Heart right ventricle (tissue), 16 donors: ENCODE measurements at regions of chr1 and their contacts with region 1.

Region 1: DNA sequence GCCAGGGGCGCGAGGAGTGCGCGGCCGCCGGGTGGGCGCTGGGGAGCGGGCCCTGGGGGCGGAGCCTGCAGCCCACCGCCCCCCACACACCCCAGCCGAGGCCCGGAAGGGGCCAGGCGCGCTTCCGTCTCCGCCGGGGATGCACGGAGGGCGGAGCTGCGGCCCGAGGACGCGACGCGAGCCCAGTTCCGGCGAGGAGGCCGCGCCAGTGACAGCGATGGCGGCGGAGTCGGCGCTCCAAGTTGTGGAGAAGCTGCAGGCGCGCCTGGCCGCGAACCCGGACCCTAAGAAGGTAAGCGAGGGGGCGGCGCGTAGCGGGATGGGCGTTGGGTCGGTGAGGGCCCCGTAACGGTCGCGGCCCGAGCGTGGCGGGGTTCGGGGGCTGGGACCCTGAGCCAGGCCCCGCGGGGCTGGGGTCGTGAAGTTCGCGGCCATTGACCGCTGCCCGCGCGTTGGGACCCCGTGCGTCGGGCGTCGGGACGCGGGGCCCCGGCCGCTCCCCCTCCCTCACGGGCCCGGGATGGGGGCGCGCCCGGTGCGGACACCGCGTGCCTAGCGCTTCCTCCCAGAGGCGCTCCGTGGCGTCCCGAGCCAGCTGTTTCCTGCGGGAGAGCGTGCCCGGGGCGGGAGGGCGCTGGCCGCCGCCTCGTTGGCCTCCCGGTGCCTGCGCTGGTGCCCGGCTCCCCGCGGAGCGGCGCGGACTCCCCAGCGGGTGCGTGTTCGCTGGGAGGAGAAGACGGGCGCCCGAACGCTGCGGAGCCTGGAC is at the start of gene ELOA:
- DNase-seq: peak; percentile 64 to 79
- ATAC-seq: peak; percentile 94 to 98 (median 96)
- H3K4me3 ChIP-seq: peak within 1 kb of the TSS; percentile 70 to 100 (median 96)
- H3K27ac ChIP-seq: peak within 1 kb of the TSS; percentile 88 to 98 (median 94)
- H3K4me1 ChIP-seq: peaks cover 8 to 52% (median 43%) of the 10 kb centered on the region in 9 donors
- H3K27me3 ChIP-seq: no peaks in the 10 kb centered on the region
- CTCF ChIP-seq: no peak
- total RNA-seq, gene ELOA: 28.3 to 39.0 (median 34.3) TPM

Region 2: GRCh38 chr1:23559136-23559984 is 184.1 kb before region 1 on chr1 and contains the start of gene ID3:
- intact Hi-C with region 1: loop called in 2 of 10 experiments (anchors 10 kb)
- DNase-seq: peak; percentile 97
- ATAC-seq: peak; percentile 66 to 83 (median 79)
- H3K4me3 ChIP-seq: peak within 1 kb of the TSS; percentile 62 to 97 (median 82)
- H3K27ac ChIP-seq: peak within 1 kb of the TSS; percentile 90 to 99 (median 95)
- H3K4me1 ChIP-seq: peaks cover 6 to 81% (median 61%) of the 10 kb centered on the region in 9 donors
- H3K27me3 ChIP-seq: peaks cover 0 to 23% (median 0%) of the 10 kb centered on the region in 7 donors
- CTCF ChIP-seq: no peak
- total RNA-seq, gene ID3: 44.7 to 148 (median 83.4) TPM

Region 3: DNA sequence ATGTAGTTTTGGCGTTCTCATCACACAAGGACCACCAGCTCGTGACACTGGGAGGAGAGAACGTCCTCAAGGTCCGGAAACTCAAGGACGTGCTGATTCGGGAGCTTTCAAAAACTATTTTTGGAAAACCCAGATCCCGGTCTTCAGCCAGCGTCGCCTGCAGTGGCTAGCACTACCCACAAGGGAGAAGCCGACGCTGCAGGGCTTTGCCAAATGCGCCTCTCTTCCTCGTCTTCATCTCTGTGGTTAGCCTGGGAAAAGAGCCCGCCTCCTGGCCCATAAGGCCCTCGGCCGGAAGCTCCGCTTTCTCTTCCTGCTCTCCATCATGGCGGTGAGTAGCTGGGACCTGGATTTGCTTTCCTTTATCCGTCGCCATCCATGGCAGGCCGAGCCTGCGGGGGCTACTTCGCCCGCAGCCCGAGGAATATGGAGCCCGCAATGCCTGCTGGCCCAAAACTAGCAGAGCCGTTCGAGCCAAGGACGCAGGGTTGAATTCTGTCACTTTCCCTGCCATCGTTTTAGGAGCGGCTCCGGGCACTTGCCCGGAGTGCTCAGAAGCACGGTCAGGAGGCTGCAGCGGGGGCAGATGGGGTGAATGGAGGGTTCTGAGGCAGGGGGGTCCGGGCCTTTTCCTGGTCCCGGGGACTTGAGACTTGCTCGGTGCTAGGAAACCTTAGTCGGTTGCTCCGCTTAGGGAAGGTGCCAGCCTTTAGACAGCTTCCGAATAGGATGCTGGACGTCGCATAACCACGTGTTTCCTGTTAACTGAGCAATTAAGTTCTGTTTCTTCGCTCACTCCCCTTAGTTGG is 51.8 kb before region 1 on chr1 and contains the start of gene RPL11:
- intact Hi-C with region 1: loop called in 6 of 10 experiments (anchors 5 to 10 kb)
- DNase-seq: peak; percentile 90 to 95
- ATAC-seq: peak; percentile 99 to 100 (median 100)
- H3K4me3 ChIP-seq: peak within 1 kb of the TSS; percentile 75 to 99 (median 84)
- H3K27ac ChIP-seq: peak within 1 kb of the TSS; percentile 67 to 95 (median 80)
- H3K4me1 ChIP-seq: peaks cover 5 to 50% (median 45%) of the 10 kb centered on the region in 9 donors
- H3K27me3 ChIP-seq: no peaks in the 10 kb centered on the region
- CTCF ChIP-seq: peak; percentile 68 to 91 (median 80)
- total RNA-seq, gene RPL11: 577 to 756 (median 612) TPM

Region 4: GRCh38 chr1:23699280-23700179 is 43.9 kb before region 1 on chr1:
- intact Hi-C with region 1: loop called in 6 of 10 experiments (anchors 5 to 10 kb)
- DNase-seq: no peak
- ATAC-seq: peak in 1 of 8 donors; percentile 19
- H3K4me3 ChIP-seq: no peak overlapping the region
- H3K27ac ChIP-seq: no peak overlapping the region
- H3K4me1 ChIP-seq: peaks cover 0 to 51% (median 27%) of the 10 kb centered on the region in 9 donors
- H3K27me3 ChIP-seq: no peaks in the 10 kb centered on the region
- CTCF ChIP-seq: no peak

Region 5: DNA sequence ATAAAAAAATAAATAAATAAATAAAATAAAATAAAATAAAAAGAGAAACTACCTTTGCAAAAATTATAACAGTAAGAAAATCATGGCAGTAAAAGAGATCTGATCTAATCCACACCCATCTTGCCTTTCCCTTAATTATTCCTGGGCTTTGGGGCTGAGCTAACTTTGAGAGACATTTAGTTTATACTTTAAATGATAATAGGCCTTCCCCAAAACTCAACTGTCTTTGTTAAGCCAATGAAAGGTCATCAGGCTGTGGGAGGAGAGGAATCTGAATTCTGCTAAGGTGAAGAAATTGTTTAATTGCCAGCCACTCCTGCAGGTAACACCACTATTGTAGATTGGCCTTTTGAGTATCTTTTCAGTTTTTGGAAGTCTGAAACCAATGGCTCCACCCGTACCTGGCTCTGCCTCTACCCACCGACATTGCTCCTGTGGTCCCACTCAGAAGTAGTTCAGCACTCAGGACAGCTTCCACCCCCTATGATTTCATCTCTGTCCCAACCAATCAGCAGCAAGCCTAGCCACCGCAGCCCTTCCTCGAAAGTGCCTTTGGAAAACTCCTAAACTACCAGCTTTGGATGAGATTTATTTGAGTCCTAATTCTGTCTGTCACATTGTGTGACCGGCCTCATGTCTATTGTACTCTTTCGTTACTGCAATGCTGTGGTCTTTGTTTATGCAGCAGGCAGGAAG is 193.2 kb after region 1 on chr1:
- intact Hi-C with region 1: no loop called
- DNase-seq: no peak
- ATAC-seq: no peak
- H3K4me3 ChIP-seq: no peak overlapping the region
- H3K27ac ChIP-seq: no peak overlapping the region
- H3K4me1 ChIP-seq: peaks cover 0 to 3% (median 0%) of the 10 kb centered on the region in 9 donors
- H3K27me3 ChIP-seq: no peaks in the 10 kb centered on the region
- CTCF ChIP-seq: no peak